Activated CD4-positive, alpha-beta T cell treated with anti-CD3 and anti-CD28 coated beads for 36 hours (primary cell): ENCODE measurements at regions of chr3 and their contacts with region 1.

Region 1: GRCh38 chr3:189324538-189325138 is 152.9 kb downstream of the TPRG1 start:
- DNase-seq: peak; percentile 91
- ATAC-seq: peak; percentile 96
- H3K4me3 Mint-ChIP-seq: peak overlapping the region; percentile 49
- H3K27ac Mint-ChIP-seq: peak overlapping the region; percentile 96
- H3K4me1 Mint-ChIP-seq: peaks cover 67% of the 10 kb centered on the region
- H3K27me3 Mint-ChIP-seq: no peaks in the 10 kb centered on the region

Region 2: DNA sequence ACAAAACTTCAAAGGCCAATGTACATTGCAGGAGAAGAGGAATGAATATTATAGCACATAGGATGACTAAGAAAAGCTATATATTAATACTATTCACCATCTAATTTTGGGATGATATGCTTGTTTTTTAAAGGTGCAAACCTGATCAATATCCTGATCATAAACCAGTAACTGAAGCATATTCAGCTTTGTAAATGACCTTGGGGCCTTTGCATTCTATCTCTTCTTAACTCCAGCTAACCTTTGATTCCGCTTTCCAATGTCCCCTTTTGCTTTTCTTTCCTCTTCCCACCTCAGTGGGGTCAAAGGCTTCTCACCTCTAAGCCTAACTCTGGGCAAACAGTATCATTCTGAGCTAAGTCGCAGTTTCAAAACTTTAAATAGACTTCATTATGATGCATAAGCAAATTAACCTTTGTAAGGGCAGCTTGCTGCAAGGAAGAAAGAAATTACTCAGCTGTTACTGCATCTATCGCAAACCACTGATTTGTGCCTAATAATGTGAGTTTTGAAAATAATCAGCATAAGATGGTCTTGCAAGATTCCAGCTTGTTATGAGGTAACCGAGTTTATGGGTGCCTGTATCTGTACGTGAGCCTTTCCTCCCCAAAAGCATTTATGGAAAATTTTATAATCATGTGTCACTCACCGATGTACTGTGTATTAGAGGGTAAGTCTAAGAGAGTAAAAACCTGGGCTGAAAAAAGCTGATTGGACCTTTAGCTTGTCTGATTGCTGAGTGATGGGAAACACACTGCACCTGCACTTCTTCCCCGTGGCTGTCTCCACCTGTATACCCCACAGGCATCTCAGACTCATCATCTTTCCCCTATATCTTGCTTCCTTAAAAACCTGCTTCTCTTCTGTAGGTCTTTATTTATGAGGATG is 36.0 kb before region 1 on chr3:
- CTCF ChIA-PET with region 1: interaction called, 3 read pairs
- POLR2A ChIA-PET with region 1: no interaction called
- intact Hi-C with region 1: loop called (anchors 1 to 5 kb)
- DNase-seq: no peak
- ATAC-seq: peak; percentile 73
- H3K4me3 Mint-ChIP-seq: peak overlapping the region; percentile 0
- H3K27ac Mint-ChIP-seq: peak overlapping the region; percentile 84
- H3K4me1 Mint-ChIP-seq: peaks cover 46% of the 10 kb centered on the region
- H3K27me3 Mint-ChIP-seq: no peaks in the 10 kb centered on the region

Region 3: GRCh38 chr3:189355481-189356201 is 31.0 kb after region 1 on chr3:
- CTCF ChIA-PET with region 1: interaction called, 3 read pairs
- POLR2A ChIA-PET with region 1: no interaction called
- intact Hi-C with region 1: loop called in 1 of 2 experiments (anchors 5 kb)
- DNase-seq: peak; percentile 56
- ATAC-seq: peak; percentile 92
- H3K4me3 Mint-ChIP-seq: peak overlapping the region; percentile 30
- H3K27ac Mint-ChIP-seq: peak overlapping the region; percentile 83
- H3K4me1 Mint-ChIP-seq: peaks cover 29% of the 10 kb centered on the region
- H3K27me3 Mint-ChIP-seq: no peaks in the 10 kb centered on the region

Region 4: GRCh38 chr3:189563866-189564563 is 239.4 kb after region 1 on chr3:
- CTCF ChIA-PET with region 1: no interaction called
- POLR2A ChIA-PET with region 1: no interaction called
- intact Hi-C with region 1: loop called in 1 of 2 experiments (anchors 2 kb)
- DNase-seq: peak; percentile 82
- ATAC-seq: peak; percentile 95
- H3K4me3 Mint-ChIP-seq: no peak overlapping the region
- H3K27ac Mint-ChIP-seq: no peak overlapping the region
- H3K4me1 Mint-ChIP-seq: peaks cover 21% of the 10 kb centered on the region
- H3K27me3 Mint-ChIP-seq: peaks cover 5% of the 10 kb centered on the region